Vagina (tissue), 2 donors: ENCODE measurements at regions of chr19 and their contacts with region 1.

Region 1: DNA sequence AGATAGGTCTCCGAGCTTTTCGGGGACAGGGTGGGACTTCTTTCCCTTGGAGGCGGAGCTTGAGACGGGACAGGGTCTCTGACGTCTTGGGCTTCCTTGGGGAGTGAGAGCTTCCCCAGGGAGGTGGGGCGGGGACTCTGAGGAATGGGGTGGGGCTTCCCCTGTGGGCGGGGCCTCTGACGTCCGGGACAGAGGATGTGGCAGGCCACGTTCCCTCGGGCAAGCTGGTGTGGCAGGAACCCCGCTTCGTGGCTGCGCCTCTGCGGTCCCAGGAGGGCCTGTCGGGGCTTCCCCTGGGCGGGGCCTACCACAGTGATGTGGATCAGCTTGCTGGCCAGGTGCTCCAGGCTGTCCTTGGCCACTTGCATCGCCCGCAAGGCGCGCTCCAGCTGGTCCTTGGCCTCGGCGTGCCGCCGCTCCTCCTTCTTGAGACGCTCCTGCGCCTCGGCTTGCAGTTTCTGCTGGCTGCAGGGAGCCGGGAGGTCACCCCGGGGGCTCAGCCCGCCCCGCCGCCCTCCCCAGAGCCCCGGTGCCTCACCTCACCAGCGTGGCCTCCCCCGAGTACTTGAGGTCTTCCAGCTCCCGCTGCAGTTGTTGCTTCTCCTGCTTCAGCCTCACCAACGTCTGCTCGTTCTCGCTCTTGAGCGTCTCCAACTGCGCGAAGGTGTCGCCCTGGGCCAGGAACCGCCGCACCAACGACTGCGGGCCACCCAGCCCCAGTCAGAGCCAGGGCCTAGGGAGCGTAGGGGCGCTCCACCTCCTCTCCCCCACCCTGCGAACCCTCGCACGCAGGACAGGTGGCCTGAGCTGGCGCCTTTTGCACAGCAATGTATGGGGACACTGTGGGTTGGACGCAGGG is 3.3 kb upstream of the RGL3 start:
- DNase-seq: peak in 1 of 2 donors; percentile 94
- H3K4me3 ChIP-seq: peak overlapping the region; percentile 33 to 47
- H3K27ac ChIP-seq: peak overlapping the region; percentile 68
- H3K4me1 ChIP-seq: peaks cover 54% of the 10 kb centered on the region
- H3K27me3 ChIP-seq: no peaks in the 10 kb centered on the region
- CTCF ChIP-seq: no peak
- POLR2A ChIP-seq: no peak

Region 2: GRCh38 chr19:11380653-11381534 is 41.5 kb before region 1 on chr19:
- intact Hi-C with region 1: loop called (anchors 5 kb)
- DNase-seq: peak in 1 of 2 donors; percentile 97
- H3K4me3 ChIP-seq: peak overlapping the region; percentile 51 to 69
- H3K27ac ChIP-seq: peak overlapping the region; percentile 94
- H3K4me1 ChIP-seq: peaks cover 74% of the 10 kb centered on the region
- H3K27me3 ChIP-seq: no peaks in the 10 kb centered on the region
- CTCF ChIP-seq: peak; percentile 61 to 82 (median 77)
- POLR2A ChIP-seq: peak in 1 of 2 donors; percentile 70

Region 3: GRCh38 chr19:11475861-11476260 is 53.5 kb after region 1 on chr19:
- intact Hi-C with region 1: no loop called
- DNase-seq: no peak
- H3K4me3 ChIP-seq: no peak overlapping the region
- H3K27ac ChIP-seq: no peak overlapping the region
- H3K4me1 ChIP-seq: peaks cover 18% of the 10 kb centered on the region
- H3K27me3 ChIP-seq: no peaks in the 10 kb centered on the region
- CTCF ChIP-seq: no peak
- POLR2A ChIP-seq: no peak

Region 4: DNA sequence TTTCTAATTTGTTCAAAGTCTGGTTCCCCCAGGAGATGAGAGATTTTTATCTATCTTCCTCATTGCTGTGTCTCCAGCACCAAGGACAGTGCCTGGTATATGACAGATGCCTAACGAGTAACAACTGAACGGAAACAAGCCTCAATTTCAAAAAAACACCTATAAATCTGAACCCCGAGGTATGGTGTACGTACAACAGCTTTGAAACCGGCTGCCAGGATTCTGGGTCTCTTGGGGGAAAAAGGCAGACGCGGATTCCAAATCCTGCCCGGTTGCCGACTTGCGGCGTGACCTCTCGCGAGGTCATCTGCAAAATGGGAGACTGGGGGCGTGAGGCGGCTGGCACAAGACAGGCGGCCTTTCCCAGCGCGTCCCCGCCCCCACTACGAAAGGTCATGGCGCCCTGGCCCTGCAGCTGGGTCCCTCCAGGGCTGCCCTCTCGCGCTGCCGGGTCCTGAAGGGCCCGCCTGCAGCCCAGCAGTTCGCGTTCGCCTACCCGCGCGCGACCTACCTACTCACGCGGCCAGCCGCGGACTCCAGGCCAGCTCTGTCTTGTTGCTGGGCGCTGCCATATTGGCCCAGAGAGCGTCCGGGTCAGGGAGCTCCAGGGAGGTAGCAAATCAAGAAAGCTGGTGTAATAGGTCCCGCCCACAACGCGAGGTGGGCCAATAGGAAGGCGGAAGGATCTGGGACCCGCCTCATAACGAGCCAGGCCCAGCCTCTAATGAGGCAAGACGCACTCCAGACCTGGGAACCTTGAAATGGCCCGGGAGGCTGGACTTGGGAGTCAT is 106.4 kb after region 1 on chr19 and contains the start of gene ECSIT:
- intact Hi-C with region 1: no loop called
- DNase-seq: peak in 1 of 2 donors; percentile 98
- H3K4me3 ChIP-seq: peak within 1 kb of the TSS; percentile 88 to 90
- H3K27ac ChIP-seq: peak within 1 kb of the TSS; percentile 83
- H3K4me1 ChIP-seq: peaks cover 23% of the 10 kb centered on the region
- H3K27me3 ChIP-seq: no peaks in the 10 kb centered on the region
- CTCF ChIP-seq: no peak
- POLR2A ChIP-seq: no peak
- total RNA-seq, gene ECSIT: 49.6 TPM